ENCODE measurements at regions of chr7 and their contacts with region 1.

Region 1: GRCh38 chr7:43700059-43700501 is 29.2 kb downstream of the COA1 start:
- DNase-seq: no peak
- H3K4me3 Mint-ChIP-seq: no peak overlapping the region
- H3K27ac Mint-ChIP-seq: no peak overlapping the region
- H3K4me1 Mint-ChIP-seq: peaks cover 56% of the 10 kb centered on the region
- H3K27me3 Mint-ChIP-seq: no peaks in the 10 kb centered on the region

Region 2: DNA sequence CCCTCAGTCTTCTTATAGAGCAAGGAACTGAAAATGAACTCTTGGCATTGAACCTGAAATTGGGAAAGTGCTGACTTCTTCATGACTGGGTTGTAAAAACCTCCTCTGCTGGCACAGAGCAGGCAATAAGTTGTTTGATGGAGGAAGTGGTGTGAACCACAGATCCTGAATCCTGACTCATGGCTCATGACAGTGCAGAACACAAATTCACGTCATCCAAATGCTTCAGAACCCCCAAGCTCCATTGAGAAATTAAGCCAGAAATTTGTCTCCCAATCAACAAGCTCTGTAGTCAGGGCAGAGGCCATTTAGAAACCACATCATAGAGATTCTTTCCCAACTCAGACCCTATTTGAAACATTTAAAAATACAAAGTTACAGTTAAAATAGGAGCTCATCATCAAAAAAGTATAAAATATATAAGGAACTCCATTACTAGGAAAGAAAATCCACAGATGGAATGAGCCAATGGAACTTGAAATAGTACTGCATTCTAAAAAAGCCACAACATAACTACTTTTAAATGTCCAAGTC is 127.5 kb before region 1 on chr7:
- CTCF ChIA-PET with region 1: interaction called, 22 read pairs
- POLR2A ChIA-PET with region 1: interaction called, 5 read pairs
- DNase-seq: peak; percentile 69
- H3K4me3 Mint-ChIP-seq: no peak overlapping the region
- H3K27ac Mint-ChIP-seq: peak overlapping the region; percentile 42
- H3K4me1 Mint-ChIP-seq: peaks cover 45% of the 10 kb centered on the region
- H3K27me3 Mint-ChIP-seq: no peaks in the 10 kb centered on the region

Region 3: DNA sequence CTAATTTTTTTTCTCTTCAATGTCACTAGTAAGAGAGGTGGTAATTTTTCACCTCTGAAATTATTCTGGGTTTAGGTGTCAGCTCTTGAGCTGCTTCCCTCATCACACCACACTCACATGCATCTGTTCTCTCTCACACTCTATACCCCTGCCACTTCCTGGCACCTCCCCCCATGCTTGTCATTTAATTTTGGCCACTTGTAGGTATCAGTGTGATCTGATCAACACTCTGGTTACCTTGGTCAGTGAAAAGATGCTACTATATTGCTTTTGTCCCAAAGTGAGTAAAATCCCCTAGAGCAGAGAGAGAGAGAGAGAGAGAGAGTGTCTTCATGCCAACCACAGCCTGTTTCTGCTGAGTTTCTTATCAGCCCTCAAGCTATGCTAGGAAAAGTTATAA is 74.6 kb before region 1 on chr7:
- CTCF ChIA-PET with region 1: interaction called, 12 read pairs
- POLR2A ChIA-PET with region 1: interaction called, 3 read pairs
- DNase-seq: peak; percentile 65
- H3K4me3 Mint-ChIP-seq: no peak overlapping the region
- H3K27ac Mint-ChIP-seq: peak overlapping the region; percentile 65
- H3K4me1 Mint-ChIP-seq: peaks cover 75% of the 10 kb centered on the region
- H3K27me3 Mint-ChIP-seq: no peaks in the 10 kb centered on the region

Region 4: GRCh38 chr7:43686991-43687390 is 13.1 kb before region 1 on chr7:
- CTCF ChIA-PET with region 1: interaction called, 17 read pairs
- POLR2A ChIA-PET with region 1: interaction called, 4 read pairs
- DNase-seq: no peak
- H3K4me3 Mint-ChIP-seq: no peak overlapping the region
- H3K27ac Mint-ChIP-seq: no peak overlapping the region
- H3K4me1 Mint-ChIP-seq: peaks cover 7% of the 10 kb centered on the region
- H3K27me3 Mint-ChIP-seq: no peaks in the 10 kb centered on the region

Region 5: GRCh38 chr7:43729214-43729923 is 29.3 kb after region 1 on chr7 and contains the start of gene COA1:
- CTCF ChIA-PET with region 1: interaction called, 12 read pairs
- POLR2A ChIA-PET with region 1: no interaction called
- DNase-seq: peak; percentile 82
- H3K4me3 Mint-ChIP-seq: peak within 1 kb of the TSS; percentile 91
- H3K27ac Mint-ChIP-seq: peak within 1 kb of the TSS; percentile 73
- H3K4me1 Mint-ChIP-seq: peaks cover 43% of the 10 kb centered on the region
- H3K27me3 Mint-ChIP-seq: no peaks in the 10 kb centered on the region
- total RNA-seq, gene COA1: 56.0 to 57.3 TPM

Region 6: DNA sequence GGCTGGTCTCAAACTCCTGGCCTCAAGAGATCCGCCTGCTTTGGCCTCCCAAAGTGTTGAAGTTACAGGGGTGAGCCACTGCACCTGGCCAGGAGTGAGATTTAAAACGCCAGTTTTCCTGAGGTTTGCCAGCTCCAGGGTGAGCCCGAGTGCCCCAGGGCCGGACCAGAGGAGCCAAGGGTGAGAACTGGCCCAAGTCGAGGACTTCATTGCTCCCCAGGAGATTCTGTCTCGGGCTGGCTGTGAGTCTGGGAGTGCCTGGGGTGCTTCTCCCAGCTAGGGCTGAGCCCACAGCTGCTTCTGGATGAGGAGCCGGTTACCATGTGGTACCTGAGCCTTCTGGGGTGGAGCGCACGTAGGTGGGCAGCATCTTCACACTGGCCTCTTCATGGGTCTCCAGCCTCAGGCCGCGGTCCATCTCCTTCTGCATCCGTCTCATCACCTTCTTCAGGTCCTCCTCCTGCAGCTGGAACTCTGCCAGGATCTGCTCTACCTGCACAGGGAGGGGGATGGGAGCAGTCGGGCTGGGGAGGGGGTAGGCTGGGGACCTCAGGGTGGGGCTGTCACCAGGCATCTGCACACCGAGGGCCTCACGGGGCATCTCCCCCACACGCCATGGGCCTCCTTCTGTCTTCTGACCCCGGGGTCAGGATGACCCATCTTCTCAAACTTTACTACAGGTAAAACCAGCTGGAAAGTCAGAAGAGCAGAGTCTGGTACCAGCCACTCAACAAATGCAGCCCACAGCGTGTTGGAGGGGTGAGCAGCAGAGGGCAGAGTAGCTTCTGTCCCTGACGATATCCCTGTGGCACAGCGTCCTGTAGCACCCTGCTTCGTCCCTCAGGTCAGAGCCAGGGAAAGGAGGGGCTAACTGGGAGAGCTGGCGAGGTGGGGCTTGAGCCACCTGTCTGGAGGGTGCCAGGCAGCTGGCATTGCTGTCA is 453.2 kb after region 1 on chr7:
- CTCF ChIA-PET with region 1: no interaction called
- POLR2A ChIA-PET with region 1: no interaction called
- DNase-seq: no peak
- H3K4me3 Mint-ChIP-seq: no peak overlapping the region
- H3K27ac Mint-ChIP-seq: no peak overlapping the region
- H3K4me1 Mint-ChIP-seq: no peaks in the 10 kb centered on the region
- H3K27me3 Mint-ChIP-seq: no peaks in the 10 kb centered on the region